ENCODE measurements at regions of chr13 and their contacts with region 1.

Region 1: GRCh38 chr13:90968166-90968904 is 379.2 kb upstream of the MIR17HG start:
- DNase-seq: peak; percentile 52
- ATAC-seq: peak; percentile 97
- H3K4me3 Mint-ChIP-seq: no peak overlapping the region
- H3K27ac Mint-ChIP-seq: no peak overlapping the region
- H3K4me1 Mint-ChIP-seq: peaks cover 13% of the 10 kb centered on the region
- H3K27me3 Mint-ChIP-seq: no peaks in the 10 kb centered on the region
- CTCF ChIP-seq: peak; percentile 37; the same call in 1 of the 2 replicates

Region 2: GRCh38 chr13:90867336-90867683 is 101.0 kb before region 1 on chr13:
- CTCF ChIA-PET with region 1: interaction called, 17 read pairs
- POLR2A ChIA-PET with region 1: interaction called, 3 read pairs
- DNase-seq: peak; percentile 77
- ATAC-seq: peak; percentile 96
- H3K4me3 Mint-ChIP-seq: no peak overlapping the region
- H3K27ac Mint-ChIP-seq: no peak overlapping the region
- H3K4me1 Mint-ChIP-seq: peaks cover 13% of the 10 kb centered on the region
- H3K27me3 Mint-ChIP-seq: no peaks in the 10 kb centered on the region
- CTCF ChIP-seq: peak; percentile 77

Region 3: GRCh38 chr13:90872491-90873025 is 95.8 kb before region 1 on chr13:
- CTCF ChIA-PET with region 1: interaction called, 17 read pairs
- POLR2A ChIA-PET with region 1: interaction called, 3 read pairs
- DNase-seq: no peak
- ATAC-seq: peak; percentile 78
- H3K4me3 Mint-ChIP-seq: no peak overlapping the region
- H3K27ac Mint-ChIP-seq: no peak overlapping the region
- H3K4me1 Mint-ChIP-seq: peaks cover 10% of the 10 kb centered on the region
- H3K27me3 Mint-ChIP-seq: no peaks in the 10 kb centered on the region
- CTCF ChIP-seq: no peak

Region 4: GRCh38 chr13:91017031-91017668 is 48.8 kb after region 1 on chr13:
- CTCF ChIA-PET with region 1: interaction called, 14 read pairs
- POLR2A ChIA-PET with region 1: no interaction called
- DNase-seq: peak; percentile 63
- ATAC-seq: peak; percentile 96
- H3K4me3 Mint-ChIP-seq: no peak overlapping the region
- H3K27ac Mint-ChIP-seq: no peak overlapping the region
- H3K4me1 Mint-ChIP-seq: 0 out of 2 replicates have a peak, but pooled peaks cover 4% of the 10 kb centered on the region
- H3K27me3 Mint-ChIP-seq: no peaks in the 10 kb centered on the region
- CTCF ChIP-seq: peak; percentile 81

Measured in WTC11 (cell line).